Ascending aorta (tissue), 2 donors: ENCODE measurements at regions of chr14 and their contacts with region 1.

Region 1: GRCh38 chr14:75088574-75089373 is 19.3 kb downstream of the ZC2HC1C start:
- DNase-seq: peak in 1 of 2 donors; percentile 69
- H3K4me3 ChIP-seq: no peak overlapping the region
- H3K27ac ChIP-seq: no peak overlapping the region
- H3K4me1 ChIP-seq: no peaks in the 10 kb centered on the region
- H3K27me3 ChIP-seq: no peaks in the 10 kb centered on the region
- CTCF ChIP-seq: peak; percentile 71 to 82 (median 78)

Region 2: DNA sequence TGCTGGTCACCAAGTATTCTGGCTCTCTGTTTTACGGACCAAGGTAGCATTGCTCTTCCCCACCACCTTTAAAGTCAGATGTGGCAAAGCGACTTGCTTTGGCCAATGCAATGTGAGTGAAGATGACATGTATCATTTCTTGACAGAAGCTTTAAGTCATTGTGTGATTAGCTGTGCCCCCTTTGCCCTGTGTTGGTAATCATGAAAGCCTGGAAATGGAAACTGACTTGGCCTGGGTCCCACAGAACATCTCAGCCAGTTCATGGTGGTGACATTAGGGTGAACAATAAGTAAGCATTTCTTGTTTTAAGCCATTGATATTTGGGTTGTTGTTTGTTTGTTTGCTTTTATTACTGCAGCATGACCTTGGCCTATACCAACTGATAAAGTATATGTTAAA is 341.5 kb before region 1 on chr14:
- intact Hi-C with region 1: no loop called
- DNase-seq: no peak
- H3K4me3 ChIP-seq: no peak overlapping the region
- H3K27ac ChIP-seq: no peak overlapping the region
- H3K4me1 ChIP-seq: no peaks in the 10 kb centered on the region
- H3K27me3 ChIP-seq: no peaks in the 10 kb centered on the region
- CTCF ChIP-seq: no peak

Region 3: DNA sequence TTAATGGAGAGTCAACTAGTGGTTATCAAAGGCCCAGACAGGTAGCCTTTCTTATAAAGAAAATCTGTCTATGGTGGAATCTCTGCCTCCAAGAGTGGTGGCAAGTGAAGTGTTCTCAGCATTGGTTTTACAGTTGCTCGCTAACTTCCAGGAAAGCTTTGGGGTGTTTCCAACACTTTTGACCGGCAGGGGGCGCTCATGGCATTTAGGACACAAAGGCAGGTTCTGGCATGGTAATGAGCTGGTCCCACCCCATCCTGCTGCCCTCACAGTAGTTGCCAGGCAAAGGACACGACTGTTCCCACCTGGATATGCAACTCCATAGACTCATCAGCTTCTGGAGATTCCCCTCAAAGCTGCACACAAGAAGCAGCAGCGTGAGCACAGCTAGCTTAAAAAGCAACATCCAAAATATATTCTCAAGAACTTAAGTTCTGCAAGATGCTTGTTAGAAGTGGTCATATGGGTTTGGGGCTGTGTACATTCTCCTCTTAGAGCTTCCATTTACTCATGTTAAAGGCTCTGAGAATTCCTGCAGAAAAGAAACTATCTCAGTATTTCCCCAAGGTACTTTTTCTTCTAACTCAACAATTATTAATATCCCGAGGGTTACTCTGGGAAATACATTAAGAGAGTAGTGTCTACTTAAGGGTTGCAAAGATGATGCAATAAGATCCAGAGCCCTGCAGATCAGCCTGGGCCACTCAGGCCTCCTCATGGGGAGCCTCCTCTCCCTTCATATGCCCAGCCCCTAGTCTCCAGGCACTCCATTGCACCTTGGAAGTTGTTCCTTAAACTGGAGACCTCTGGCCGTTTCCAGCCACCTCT is 227.7 kb before region 1 on chr14:
- intact Hi-C with region 1: loop called (anchors 2 kb)
- DNase-seq: peak; percentile 51 to 95
- H3K4me3 ChIP-seq: no peak overlapping the region
- H3K27ac ChIP-seq: no peak overlapping the region
- H3K4me1 ChIP-seq: no peaks in the 10 kb centered on the region
- H3K27me3 ChIP-seq: no peaks in the 10 kb centered on the region
- CTCF ChIP-seq: peak; percentile 77 to 81 (median 80)

Region 4: GRCh38 chr14:74913986-74914573 is 174.7 kb before region 1 on chr14:
- intact Hi-C with region 1: loop called (anchors 1 kb)
- DNase-seq: peak in 1 of 2 donors; percentile 87
- H3K4me3 ChIP-seq: no peak overlapping the region
- H3K27ac ChIP-seq: peak overlapping the region; percentile 12 to 27
- H3K4me1 ChIP-seq: peaks cover 2 to 13% of the 10 kb centered on the region in 2 donors
- H3K27me3 ChIP-seq: no peaks in the 10 kb centered on the region
- CTCF ChIP-seq: peak; percentile 71 to 77 (median 74)

Region 5: DNA sequence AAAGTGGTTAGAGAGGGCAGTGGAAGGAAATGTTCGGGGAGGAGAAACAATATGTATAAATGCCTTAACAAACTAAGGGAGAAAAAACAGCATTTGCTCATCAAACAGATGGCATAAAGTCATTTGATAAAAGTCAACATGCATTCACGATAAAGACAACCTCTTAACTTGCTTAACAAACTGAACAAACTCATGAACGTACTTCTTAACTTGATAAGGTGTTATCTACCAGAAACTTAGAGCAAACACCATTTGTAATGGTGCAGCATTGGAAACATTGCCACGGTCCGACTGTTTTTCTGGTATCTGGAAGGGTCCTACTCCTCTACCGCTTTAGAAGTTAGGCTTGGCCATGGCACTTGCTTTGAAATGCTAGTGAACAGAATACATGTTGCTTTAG is 161.5 kb before region 1 on chr14:
- intact Hi-C with region 1: no loop called
- DNase-seq: no peak
- H3K4me3 ChIP-seq: no peak overlapping the region
- H3K27ac ChIP-seq: no peak overlapping the region
- H3K4me1 ChIP-seq: peaks cover 0 to 9% of the 10 kb centered on the region in 2 donors
- H3K27me3 ChIP-seq: no peaks in the 10 kb centered on the region
- CTCF ChIP-seq: no peak

Region 6: GRCh38 chr14:75258615-75259466 is 170.1 kb after region 1 on chr14:
- intact Hi-C with region 1: no loop called
- DNase-seq: peak; percentile 97 to 100
- H3K4me3 ChIP-seq: peak overlapping the region; percentile 46 to 62
- H3K27ac ChIP-seq: peak overlapping the region; percentile 93 to 97
- H3K4me1 ChIP-seq: peaks cover 0 to 32% of the 10 kb centered on the region in 2 donors
- H3K27me3 ChIP-seq: no peaks in the 10 kb centered on the region
- CTCF ChIP-seq: no peak